B cell (primary cell): ENCODE measurements at regions of chr17 and their contacts with region 1.

Region 1: GRCh38 chr17:45098869-45099616 is 33.3 kb downstream of the PLCD3 start:
- DNase-seq: peak; percentile 78
- ATAC-seq: peak; percentile 84
- H3K4me3 ChIP-seq: no peak overlapping the region
- H3K4me3 Mint-ChIP-seq: no peak overlapping the region
- H3K27ac ChIP-seq: no peak overlapping the region
- H3K27ac Mint-ChIP-seq: peak overlapping the region; percentile 6
- H3K4me1 ChIP-seq: no peaks in the 10 kb centered on the region
- H3K4me1 Mint-ChIP-seq: peaks cover 7% of the 10 kb centered on the region
- H3K27me3 ChIP-seq: no peaks in the 10 kb centered on the region
- H3K27me3 Mint-ChIP-seq: no peaks in the 10 kb centered on the region
- CTCF ChIP-seq: peak; percentile 88

Region 2: GRCh38 chr17:45070809-45071208 is 28.2 kb before region 1 on chr17:
- CTCF ChIA-PET with region 1: interaction called, 5 read pairs
- POLR2A ChIA-PET with region 1: no interaction called
- intact Hi-C with region 1: loop called (anchors 1 kb)
- DNase-seq: no peak
- ATAC-seq: no peak
- H3K4me3 ChIP-seq: no peak overlapping the region
- H3K4me3 Mint-ChIP-seq: no peak overlapping the region
- H3K27ac ChIP-seq: no peak overlapping the region
- H3K27ac Mint-ChIP-seq: no peak overlapping the region
- H3K4me1 ChIP-seq: no peaks in the 10 kb centered on the region
- H3K4me1 Mint-ChIP-seq: peaks cover 14% of the 10 kb centered on the region
- H3K27me3 ChIP-seq: no peaks in the 10 kb centered on the region
- H3K27me3 Mint-ChIP-seq: no peaks in the 10 kb centered on the region
- CTCF ChIP-seq: no peak

Region 3: GRCh38 chr17:45261577-45262515 is 162.8 kb after region 1 on chr17 and contains the start of gene SPATA32:
- CTCF ChIA-PET with region 1: no interaction called
- POLR2A ChIA-PET with region 1: no interaction called
- intact Hi-C with region 1: no loop called
- DNase-seq: peak; percentile 68
- ATAC-seq: peak; percentile 71
- H3K4me3 ChIP-seq: peak within 1 kb of the TSS; percentile 19 to 81 (median 73)
- H3K4me3 Mint-ChIP-seq: peak within 1 kb of the TSS; percentile 87
- H3K27ac ChIP-seq: peak within 1 kb of the TSS; percentile 51 to 62
- H3K27ac Mint-ChIP-seq: peak within 1 kb of the TSS; percentile 78
- H3K4me1 ChIP-seq: peaks cover 5 to 18% of the 10 kb centered on the region in 2 donors
- H3K4me1 Mint-ChIP-seq: peaks cover 16% of the 10 kb centered on the region
- H3K27me3 ChIP-seq: no peaks in the 10 kb centered on the region
- H3K27me3 Mint-ChIP-seq: no peaks in the 10 kb centered on the region
- CTCF ChIP-seq: no peak
- total RNA-seq, gene SPATA32: 0.27 and 0.52 TPM in 2 replicates